PC-9 (cell line): ENCODE measurements at regions of chr1 and their contacts with region 1.

Region 1: GRCh38 chr1:156001682-156002171 is 19.0 kb downstream of the SSR2 start:
- DNase-seq: peak in 1 of 2 experiments; percentile 12
- H3K4me3 ChIP-seq: peak overlapping the region; percentile 25; the same call in 1 of the 2 replicates
- H3K27ac ChIP-seq: peak overlapping the region; percentile 81
- H3K4me1 ChIP-seq: peaks cover 57% of the 10 kb centered on the region
- H3K27me3 ChIP-seq: no peaks in the 10 kb centered on the region
- CTCF ChIP-seq: no peak

Region 2: GRCh38 chr1:154982897-154983648 is 1018.7 kb before region 1 on chr1 and contains the start of gene FLAD1:
- CTCF ChIA-PET with region 1: no interaction called
- POLR2A ChIA-PET with region 1: interaction called, 10 read pairs
- intact Hi-C with region 1: no loop called
- DNase-seq: peak; percentile 95 to 99
- H3K4me3 ChIP-seq: peak within 1 kb of the TSS; percentile 72
- H3K27ac ChIP-seq: peak within 1 kb of the TSS; percentile 21; the same call in 1 of the 2 replicates
- H3K4me1 ChIP-seq: peaks cover 32% of the 10 kb centered on the region
- H3K27me3 ChIP-seq: no peaks in the 10 kb centered on the region
- CTCF ChIP-seq: no peak
- total RNA-seq, gene FLAD1: 47.9 and 54.2 TPM in 2 replicates

Region 3: DNA sequence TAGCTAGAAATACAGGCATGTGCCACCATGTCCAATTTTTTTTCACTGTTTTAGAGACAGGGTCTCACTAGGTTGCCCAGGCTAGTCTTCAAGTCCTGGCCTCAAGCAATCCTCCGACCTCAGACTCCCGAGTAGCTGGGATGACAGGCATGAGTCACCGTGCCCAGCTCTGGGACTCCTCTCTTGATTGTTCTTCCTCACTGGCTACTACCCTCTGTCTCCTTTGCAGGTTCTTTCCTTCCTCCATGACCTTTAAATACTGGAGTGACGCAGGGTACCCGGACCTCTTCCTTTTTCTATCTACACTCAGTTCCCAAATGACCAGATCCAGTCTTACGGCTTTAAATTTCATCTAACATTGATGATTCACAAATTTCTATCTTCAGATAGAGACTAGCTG is 474.1 kb before region 1 on chr1:
- CTCF ChIA-PET with region 1: interaction called, 13 read pairs
- POLR2A ChIA-PET with region 1: no interaction called
- intact Hi-C with region 1: no loop called
- DNase-seq: no peak
- H3K4me3 ChIP-seq: no peak overlapping the region
- H3K27ac ChIP-seq: no peak overlapping the region
- H3K4me1 ChIP-seq: no peaks in the 10 kb centered on the region
- H3K27me3 ChIP-seq: no peaks in the 10 kb centered on the region
- CTCF ChIP-seq: no peak

Region 4: DNA sequence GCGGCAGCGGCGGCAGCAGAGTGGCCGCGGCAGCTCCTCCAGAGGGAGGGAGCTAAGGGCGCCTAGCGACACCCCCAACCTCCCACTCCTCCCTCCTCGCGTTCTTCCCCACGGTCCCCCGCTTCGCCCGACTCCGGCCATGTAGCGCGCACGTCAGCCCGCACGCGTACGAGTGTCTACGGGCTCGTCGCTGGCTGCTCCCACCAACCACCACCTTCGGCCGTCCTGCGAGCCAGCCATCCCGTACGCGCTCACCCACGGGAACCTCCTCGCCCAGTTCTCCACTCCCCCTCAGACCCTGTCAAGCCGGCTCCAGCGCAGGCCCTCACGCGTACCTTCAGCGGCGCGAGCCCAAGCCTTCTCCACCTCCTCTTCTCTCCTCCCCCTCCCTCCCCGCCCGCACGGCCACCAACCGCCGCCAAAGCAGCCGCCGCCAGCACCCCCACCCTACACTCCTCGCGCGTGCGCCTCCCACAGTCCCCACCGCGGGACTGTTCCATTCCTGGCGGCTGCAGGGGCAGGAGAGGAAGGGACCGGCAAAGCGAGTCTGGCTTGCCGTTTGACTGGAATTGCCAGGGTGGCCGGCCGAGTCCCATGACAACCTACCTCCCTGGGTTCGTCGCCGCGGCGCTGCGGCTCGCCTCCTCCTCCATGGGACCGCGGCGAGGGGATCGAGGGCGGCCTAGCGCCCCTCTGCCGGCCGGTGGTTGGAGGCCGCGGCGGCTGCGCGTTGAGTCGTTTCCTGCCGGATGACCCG is 313.2 kb before region 1 on chr1 and contains the start of gene YY1AP1:
- CTCF ChIA-PET with region 1: interaction called, 16 read pairs
- POLR2A ChIA-PET with region 1: no interaction called
- intact Hi-C with region 1: no loop called
- DNase-seq: peak; percentile 59 to 91
- H3K4me3 ChIP-seq: peak within 1 kb of the TSS; percentile 88
- H3K27ac ChIP-seq: peak within 1 kb of the TSS; percentile 94
- H3K4me1 ChIP-seq: peaks cover 16% of the 10 kb centered on the region
- H3K27me3 ChIP-seq: no peaks in the 10 kb centered on the region
- CTCF ChIP-seq: no peak
- total RNA-seq, gene YY1AP1: 38.3 and 40.6 TPM in 2 replicates

Region 5: GRCh38 chr1:155970531-155971167 is 31.1 kb before region 1 on chr1:
- CTCF ChIA-PET with region 1: no interaction called
- POLR2A ChIA-PET with region 1: no interaction called
- intact Hi-C with region 1: no loop called
- DNase-seq: no peak
- H3K4me3 ChIP-seq: no peak overlapping the region
- H3K27ac ChIP-seq: no peak overlapping the region
- H3K4me1 ChIP-seq: peaks cover 29% of the 10 kb centered on the region
- H3K27me3 ChIP-seq: no peaks in the 10 kb centered on the region
- CTCF ChIP-seq: no peak

Region 6: GRCh38 chr1:156060937-156061636 is 59.4 kb after region 1 on chr1 and contains the start of gene RAB25:
- CTCF ChIA-PET with region 1: no interaction called
- POLR2A ChIA-PET with region 1: interaction called, 4 read pairs
- intact Hi-C with region 1: loop called (anchors 5 kb)
- DNase-seq: peak; percentile 90 to 92
- H3K4me3 ChIP-seq: peak within 1 kb of the TSS; percentile 64
- H3K27ac ChIP-seq: peak within 1 kb of the TSS; percentile 61
- H3K4me1 ChIP-seq: peaks cover 18% of the 10 kb centered on the region
- H3K27me3 ChIP-seq: no peaks in the 10 kb centered on the region
- CTCF ChIP-seq: no peak
- total RNA-seq, gene RAB25: 129 and 194 TPM in 2 replicates

Region 7: DNA sequence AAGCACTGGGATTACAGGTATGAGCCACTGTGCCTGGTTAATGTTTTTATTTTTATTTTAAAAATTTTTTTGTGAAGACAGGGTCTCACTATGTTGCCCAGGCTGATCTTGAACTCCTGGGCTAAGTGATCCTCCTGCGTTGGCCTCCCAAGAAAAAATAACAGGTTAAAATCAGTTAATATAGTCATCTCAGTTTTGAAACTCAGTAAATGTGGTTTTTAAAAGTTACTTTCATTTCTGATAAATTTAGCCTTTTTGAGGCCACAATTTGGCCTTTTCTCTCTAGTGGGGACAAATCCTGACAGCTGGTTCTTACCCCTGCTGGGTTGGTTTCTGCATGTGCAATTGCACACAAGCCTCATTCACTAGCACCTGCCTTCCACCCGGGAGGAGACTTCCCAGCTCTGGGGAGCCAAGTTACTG is 224.4 kb after region 1 on chr1:
- CTCF ChIA-PET with region 1: no interaction called
- POLR2A ChIA-PET with region 1: no interaction called
- intact Hi-C with region 1: loop called (anchors 5 kb)
- DNase-seq: no peak
- H3K4me3 ChIP-seq: no peak overlapping the region
- H3K27ac ChIP-seq: no peak overlapping the region
- H3K4me1 ChIP-seq: 0 out of 2 replicates have a peak, but pooled peaks cover 5% of the 10 kb centered on the region
- H3K27me3 ChIP-seq: no peaks in the 10 kb centered on the region
- CTCF ChIP-seq: no peak